Aorta (tissue), 5 donors: ENCODE measurements at regions of chr7 and their contacts with region 1.

Region 1: GRCh38 chr7:106153891-106154449 is 41.9 kb upstream of the SYPL1 start:
- DNase-seq: peak; percentile 87 to 93
- ATAC-seq: peak; percentile 95
- H3K4me3 ChIP-seq: no peak overlapping the region
- H3K27ac ChIP-seq: no peak overlapping the region
- H3K4me1 ChIP-seq: no peaks in the 10 kb centered on the region
- H3K27me3 ChIP-seq: no peaks in the 10 kb centered on the region

Region 2: DNA sequence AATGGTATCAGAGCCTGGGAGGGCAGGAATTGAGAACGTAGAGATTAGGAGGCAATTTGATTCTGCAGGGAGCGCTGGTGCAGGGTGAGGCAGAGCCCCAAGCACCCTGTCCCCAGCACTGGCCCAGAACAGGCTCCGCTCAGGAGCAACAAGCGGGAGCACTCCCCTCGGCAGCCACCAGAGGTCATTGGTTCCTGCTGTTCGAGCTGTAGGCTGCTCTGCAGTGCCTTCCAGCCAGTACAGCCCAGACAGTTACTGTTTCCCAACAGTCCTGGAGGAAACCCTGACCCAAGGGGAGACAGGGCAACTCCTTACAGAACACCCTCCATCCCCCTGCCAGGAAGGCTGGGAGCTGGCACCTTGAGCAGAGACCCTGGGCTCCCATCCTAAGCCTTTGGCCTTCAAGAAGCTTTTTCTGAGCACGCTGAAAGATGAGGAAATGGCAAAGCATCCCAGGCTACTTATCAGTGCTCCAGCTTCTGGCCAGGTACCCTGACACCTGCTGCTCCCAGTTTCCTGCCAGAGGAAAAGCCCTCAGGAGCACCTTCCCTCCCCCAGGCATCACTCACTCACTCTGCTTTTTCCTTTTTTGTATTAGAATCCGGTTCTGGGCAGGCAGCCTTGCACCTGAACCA is 501.5 kb before region 1 on chr7:
- intact Hi-C with region 1: loop called in 1 of 2 experiments (anchors 10 kb)
- DNase-seq: peak; percentile 78 to 91
- ATAC-seq: peak; percentile 85
- H3K4me3 ChIP-seq: no peak overlapping the region
- H3K27ac ChIP-seq: no peak overlapping the region
- H3K4me1 ChIP-seq: no peaks in the 10 kb centered on the region
- H3K27me3 ChIP-seq: no peaks in the 10 kb centered on the region

Region 3: DNA sequence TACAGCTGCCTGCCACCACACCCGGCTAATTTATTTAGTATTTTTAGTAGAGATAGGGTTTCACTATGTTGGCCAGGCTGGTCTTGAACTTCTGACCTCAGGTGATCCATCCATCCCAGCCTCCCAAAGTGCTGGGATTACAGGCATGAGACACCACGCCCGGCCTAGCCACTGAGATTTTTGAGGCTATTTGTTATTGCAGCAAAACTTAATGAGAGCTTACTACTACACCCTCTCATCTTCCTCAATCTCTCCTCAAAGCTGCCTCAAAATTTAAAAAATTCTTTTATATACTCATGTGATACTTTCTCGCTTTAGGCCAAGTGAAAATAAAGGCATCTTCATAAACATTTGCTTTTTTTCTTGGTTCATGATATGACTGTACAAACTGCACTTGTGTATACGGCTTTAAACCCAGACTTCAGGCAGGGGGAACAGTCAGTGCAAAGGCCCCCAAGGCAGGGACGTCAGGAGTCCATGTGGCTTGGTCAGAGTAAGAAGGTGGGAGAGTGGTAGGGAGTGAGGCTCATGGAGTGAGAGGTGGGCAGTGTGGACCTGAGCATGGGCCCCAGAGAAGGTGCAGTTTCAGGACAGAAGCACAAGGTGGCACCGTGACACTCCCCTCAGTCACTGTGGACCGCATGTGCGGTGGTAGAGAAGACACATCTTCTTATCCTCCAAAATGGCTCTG is 97.3 kb before region 1 on chr7:
- intact Hi-C with region 1: loop called (anchors 1 to 2 kb)
- DNase-seq: peak; percentile 73 to 86
- ATAC-seq: peak; percentile 91
- H3K4me3 ChIP-seq: no peak overlapping the region
- H3K27ac ChIP-seq: no peak overlapping the region
- H3K4me1 ChIP-seq: no peaks in the 10 kb centered on the region
- H3K27me3 ChIP-seq: no peaks in the 10 kb centered on the region

Region 4: GRCh38 chr7:106112117-106112971 is 41.6 kb before region 1 on chr7 and contains the start of gene SYPL1:
- intact Hi-C with region 1: loop called in 1 of 2 experiments (anchors 5 kb)
- DNase-seq: peak; percentile 96 to 97
- ATAC-seq: peak; percentile 97
- H3K4me3 ChIP-seq: peak within 1 kb of the TSS; percentile 62 to 67
- H3K27ac ChIP-seq: peak within 1 kb of the TSS; percentile 76 to 96
- H3K4me1 ChIP-seq: peaks cover 2 to 3% of the 10 kb centered on the region in 2 donors
- H3K27me3 ChIP-seq: no peaks in the 10 kb centered on the region
- total RNA-seq, gene SYPL1: 69.1 to 70.5 TPM